ENCODE measurements at regions of chr2 and their contacts with region 1.

Region 1: DNA sequence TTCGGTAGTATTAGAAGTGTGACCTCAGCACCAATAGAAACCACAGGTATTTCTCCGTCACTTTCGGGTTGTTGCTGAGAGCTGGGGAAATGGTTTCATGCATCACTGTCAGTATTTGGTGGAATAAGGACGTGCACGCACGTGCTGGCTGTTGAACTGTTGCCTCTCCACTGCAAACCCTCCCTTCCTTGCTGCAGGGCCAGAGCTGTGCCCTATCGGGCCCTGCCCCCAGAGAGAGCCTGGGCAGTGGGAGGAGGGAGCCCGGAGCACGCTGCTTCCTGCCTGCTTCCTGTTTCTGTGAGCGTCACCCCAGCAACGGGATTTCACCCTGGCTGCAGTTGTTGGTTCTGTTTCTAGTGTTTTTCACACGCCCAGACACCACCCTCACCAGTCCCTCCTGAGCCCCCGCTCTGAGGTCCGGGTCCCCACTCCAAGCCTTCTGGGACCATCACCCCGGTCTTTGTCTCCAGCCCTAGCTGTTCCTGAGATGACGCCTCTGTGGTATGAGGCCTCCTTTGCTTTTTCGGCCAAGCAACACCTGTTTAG is 47.4 kb downstream of the LRRFIP1 start:
- DNase-seq: peak; percentile 95 to 98 (median 97)
- H3K4me3 ChIP-seq: peak overlapping the region in 6 of 7 experiments; percentile 29 to 77 (median 56)
- H3K27ac ChIP-seq: peak overlapping the region; percentile 97 to 98
- H3K4me1 ChIP-seq: peaks cover 40 to 74% (median 68%) of the 10 kb centered on the region in 4 experiments
- H3K27me3 ChIP-seq: no peaks in the 10 kb centered on the region

Region 2: GRCh38 chr2:237378650-237379049 is 296.2 kb before region 1 on chr2:
- CTCF ChIA-PET with region 1: no interaction called
- POLR2A ChIA-PET with region 1: no interaction called
- DNase-seq: no peak
- H3K4me3 ChIP-seq: no peak overlapping the region
- H3K27ac ChIP-seq: no peak overlapping the region
- H3K4me1 ChIP-seq: no peaks in the 10 kb centered on the region
- H3K27me3 ChIP-seq: peaks cover 0 to 8% (median 0%) of the 10 kb centered on the region in 5 experiments

Region 3: DNA sequence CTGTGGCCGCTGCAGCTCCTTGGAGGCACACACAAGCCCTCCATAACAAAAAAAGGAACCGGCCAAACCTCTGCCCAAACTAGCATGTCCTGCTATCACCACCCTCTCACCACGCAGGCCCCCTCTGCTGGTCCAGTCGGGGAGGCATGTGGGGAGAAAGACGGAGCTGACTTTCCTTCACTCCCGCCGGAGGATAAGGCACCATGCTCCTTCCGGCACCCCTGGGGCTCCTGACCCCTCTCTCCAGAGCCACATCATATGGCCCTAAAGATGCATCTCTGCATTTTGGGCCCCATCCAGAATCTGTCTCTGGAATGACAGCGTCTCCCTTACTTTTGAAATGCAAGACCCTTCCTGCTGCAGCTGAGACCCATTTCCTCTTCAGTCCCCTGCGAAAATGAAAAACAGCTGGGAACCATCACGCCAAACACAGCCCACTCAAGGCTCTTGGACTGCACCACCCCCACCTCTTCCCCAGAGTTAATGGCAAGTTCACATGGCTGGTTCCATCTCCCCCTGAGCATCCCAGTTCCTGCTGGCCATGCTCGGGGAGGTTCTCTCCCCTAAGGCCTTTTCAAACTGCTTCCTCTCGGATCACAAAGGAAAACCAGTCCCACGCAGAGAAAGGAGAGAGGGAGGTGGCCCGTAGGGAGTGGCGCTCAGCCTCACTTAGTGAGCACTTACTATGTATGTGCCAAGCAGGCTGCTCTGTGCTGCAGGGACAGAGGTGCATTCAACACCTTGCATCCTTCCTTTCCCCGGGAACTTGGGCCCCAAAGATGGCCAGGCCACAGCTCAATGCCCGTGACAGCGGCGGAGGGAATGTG is 222.9 kb before region 1 on chr2:
- CTCF ChIA-PET with region 1: no interaction called
- POLR2A ChIA-PET with region 1: no interaction called
- DNase-seq: no peak
- H3K4me3 ChIP-seq: no peak overlapping the region
- H3K27ac ChIP-seq: no peak overlapping the region
- H3K4me1 ChIP-seq: peaks cover 0 to 61% (median 37%) of the 10 kb centered on the region in 4 experiments
- H3K27me3 ChIP-seq: no peaks in the 10 kb centered on the region

Region 4: DNA sequence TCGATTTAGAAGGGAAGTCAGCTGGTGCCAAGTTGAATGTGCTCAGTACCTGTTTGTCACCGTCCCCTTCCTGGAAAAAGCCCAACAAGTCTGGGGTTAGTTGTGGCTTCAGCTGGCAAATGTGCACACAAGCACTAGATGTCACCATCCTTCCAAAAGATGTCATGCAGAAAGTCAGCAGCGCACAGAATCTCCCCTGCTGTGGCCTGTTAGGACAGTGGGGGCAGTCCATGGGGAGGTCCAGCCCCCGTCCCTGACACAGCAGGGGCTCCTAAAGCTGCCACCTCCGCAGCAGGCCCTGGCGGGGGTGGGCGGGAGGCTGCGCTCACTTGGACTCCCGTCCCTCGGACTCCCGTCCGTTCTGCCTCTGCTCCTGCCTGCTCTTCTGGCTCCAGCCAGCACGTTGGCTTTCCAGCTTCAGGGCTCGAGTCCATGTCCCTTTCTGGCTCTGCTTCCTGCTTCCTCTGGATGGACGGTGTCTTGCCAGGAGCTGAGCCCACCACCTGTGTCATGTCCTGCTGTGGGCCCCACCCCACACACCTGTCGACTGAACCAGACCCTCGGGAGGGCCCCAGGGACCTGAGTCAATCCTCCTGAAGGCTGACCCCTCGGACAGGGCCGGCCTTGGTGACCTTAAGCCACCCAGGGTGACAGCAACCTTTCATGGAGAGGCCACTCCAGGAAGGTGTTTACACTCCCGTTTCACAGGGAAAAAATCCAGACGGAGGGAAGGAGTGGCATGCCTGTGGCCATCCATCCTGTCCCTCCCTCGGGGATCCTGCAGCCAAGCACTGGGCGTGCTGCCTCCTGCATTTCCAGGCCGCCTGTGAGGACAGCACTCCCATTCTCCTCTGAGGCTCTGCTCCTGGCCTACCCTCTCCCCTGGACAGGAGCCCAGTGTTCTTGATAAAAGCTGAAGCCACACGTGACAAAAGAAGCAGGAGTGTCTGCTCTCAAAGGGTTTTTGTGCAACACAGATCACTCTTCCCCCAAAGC is 92.8 kb before region 1 on chr2:
- CTCF ChIA-PET with region 1: interaction called, 18 read pairs
- POLR2A ChIA-PET with region 1: no interaction called
- DNase-seq: peak; percentile 85 to 92 (median 92)
- H3K4me3 ChIP-seq: peak overlapping the region in 1 of 7 experiments; percentile 46
- H3K27ac ChIP-seq: no peak overlapping the region
- H3K4me1 ChIP-seq: peaks cover 0 to 12% (median 8%) of the 10 kb centered on the region in 4 experiments
- H3K27me3 ChIP-seq: no peaks in the 10 kb centered on the region

Region 5: DNA sequence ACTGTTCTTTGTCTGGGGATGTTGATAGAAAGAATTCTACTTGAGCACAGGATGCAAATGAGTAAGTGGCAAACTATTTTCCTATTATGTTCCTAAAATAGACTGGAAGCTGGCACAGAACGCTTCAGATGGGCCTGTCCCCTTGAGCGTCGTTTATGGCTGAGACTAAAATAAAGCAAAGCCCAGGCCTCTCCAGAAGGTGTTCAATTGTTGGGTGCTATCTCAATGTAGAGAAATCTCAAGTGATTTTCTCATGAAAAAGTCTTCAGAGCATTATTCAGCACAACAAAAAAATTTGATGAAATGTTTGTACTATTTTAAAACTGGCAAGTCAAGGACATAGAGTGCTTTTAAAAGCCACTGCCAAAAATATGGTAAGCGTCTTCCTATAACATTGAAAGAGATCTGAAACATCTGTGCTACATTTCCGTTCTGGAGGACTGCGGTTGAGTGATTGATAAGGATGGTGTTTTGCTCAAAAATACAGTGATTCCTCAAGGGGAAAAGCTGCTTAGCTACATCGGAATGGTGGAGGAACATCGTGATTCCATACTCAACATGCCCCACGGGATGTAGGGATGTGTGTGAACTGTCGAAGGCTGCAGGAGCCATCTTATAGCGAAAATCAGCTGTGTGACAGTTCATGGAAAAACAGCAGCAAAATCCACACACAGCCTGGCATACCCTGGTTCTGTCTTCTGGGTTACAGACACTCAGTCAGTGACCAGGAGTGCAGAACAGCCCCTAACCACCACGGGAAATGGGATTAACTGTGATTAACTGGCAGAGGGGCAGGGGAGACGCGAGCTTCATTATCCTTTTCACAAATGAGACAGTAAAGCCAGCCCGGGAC is 57.8 kb before region 1 on chr2:
- CTCF ChIA-PET with region 1: interaction called, 26 read pairs
- POLR2A ChIA-PET with region 1: no interaction called
- DNase-seq: peak; percentile 88 to 97 (median 94)
- H3K4me3 ChIP-seq: peak overlapping the region in 3 of 7 experiments; percentile 21 to 62 (median 29)
- H3K27ac ChIP-seq: no peak overlapping the region
- H3K4me1 ChIP-seq: peaks cover 31 to 58% (median 52%) of the 10 kb centered on the region in 4 experiments
- H3K27me3 ChIP-seq: no peaks in the 10 kb centered on the region

Region 6: GRCh38 chr2:237662671-237663093 is 12.1 kb before region 1 on chr2:
- CTCF ChIA-PET with region 1: interaction called, 10 read pairs
- POLR2A ChIA-PET with region 1: interaction called, 6 read pairs
- DNase-seq: peak; percentile 89 to 97 (median 97)
- H3K4me3 ChIP-seq: peak overlapping the region in 3 of 7 experiments; percentile 39 to 66 (median 40)
- H3K27ac ChIP-seq: no peak overlapping the region
- H3K4me1 ChIP-seq: peaks cover 0 to 24% (median 14%) of the 10 kb centered on the region in 4 experiments
- H3K27me3 ChIP-seq: peaks cover 0 to 2% (median 0%) of the 10 kb centered on the region in 5 experiments

Region 7: GRCh38 chr2:237691908-237692600 is 17.2 kb after region 1 on chr2:
- CTCF ChIA-PET with region 1: interaction called, 404 read pairs
- POLR2A ChIA-PET with region 1: interaction called, 78 read pairs
- DNase-seq: peak; percentile 83 to 90 (median 90)
- H3K4me3 ChIP-seq: peak overlapping the region; percentile 78 to 99 (median 95)
- H3K27ac ChIP-seq: peak overlapping the region; percentile 90 to 93
- H3K4me1 ChIP-seq: peaks cover 49 to 90% (median 78%) of the 10 kb centered on the region in 4 experiments
- H3K27me3 ChIP-seq: no peaks in the 10 kb centered on the region

Region 8: GRCh38 chr2:237731663-237732062 is 56.9 kb after region 1 on chr2:
- CTCF ChIA-PET with region 1: interaction called, 65 read pairs
- POLR2A ChIA-PET with region 1: interaction called, 9 read pairs
- DNase-seq: peak in 2 of 3 donors; percentile 59 to 62
- H3K4me3 ChIP-seq: no peak overlapping the region
- H3K27ac ChIP-seq: no peak overlapping the region
- H3K4me1 ChIP-seq: peaks cover 0 to 32% (median 24%) of the 10 kb centered on the region in 4 experiments
- H3K27me3 ChIP-seq: no peaks in the 10 kb centered on the region

Region 9: DNA sequence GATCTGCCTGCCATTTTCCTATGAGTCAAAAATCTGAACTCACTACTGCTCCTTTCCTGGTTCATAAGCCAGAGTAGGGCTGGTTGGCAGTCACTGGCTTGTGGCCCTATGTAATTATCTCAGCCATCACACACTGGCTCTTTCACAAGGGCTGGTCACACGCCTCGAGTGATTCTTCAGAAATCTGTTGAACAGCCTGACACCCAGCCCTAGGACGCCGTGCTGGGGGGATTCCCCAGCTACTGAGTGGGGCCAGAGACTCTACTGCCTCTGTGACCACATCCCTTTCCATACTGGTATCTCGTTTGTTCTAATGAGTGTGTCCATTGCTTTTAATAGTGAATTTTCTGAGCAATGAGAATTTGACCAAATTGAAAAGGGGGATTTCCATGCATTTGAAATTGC is 78.0 kb after region 1 on chr2:
- CTCF ChIA-PET with region 1: interaction called, 160 read pairs
- POLR2A ChIA-PET with region 1: no interaction called
- DNase-seq: peak in 2 of 3 donors; percentile 69
- H3K4me3 ChIP-seq: no peak overlapping the region
- H3K27ac ChIP-seq: no peak overlapping the region
- H3K4me1 ChIP-seq: peaks cover 0 to 2% (median 0%) of the 10 kb centered on the region in 4 experiments
- H3K27me3 ChIP-seq: no peaks in the 10 kb centered on the region

Region 10: DNA sequence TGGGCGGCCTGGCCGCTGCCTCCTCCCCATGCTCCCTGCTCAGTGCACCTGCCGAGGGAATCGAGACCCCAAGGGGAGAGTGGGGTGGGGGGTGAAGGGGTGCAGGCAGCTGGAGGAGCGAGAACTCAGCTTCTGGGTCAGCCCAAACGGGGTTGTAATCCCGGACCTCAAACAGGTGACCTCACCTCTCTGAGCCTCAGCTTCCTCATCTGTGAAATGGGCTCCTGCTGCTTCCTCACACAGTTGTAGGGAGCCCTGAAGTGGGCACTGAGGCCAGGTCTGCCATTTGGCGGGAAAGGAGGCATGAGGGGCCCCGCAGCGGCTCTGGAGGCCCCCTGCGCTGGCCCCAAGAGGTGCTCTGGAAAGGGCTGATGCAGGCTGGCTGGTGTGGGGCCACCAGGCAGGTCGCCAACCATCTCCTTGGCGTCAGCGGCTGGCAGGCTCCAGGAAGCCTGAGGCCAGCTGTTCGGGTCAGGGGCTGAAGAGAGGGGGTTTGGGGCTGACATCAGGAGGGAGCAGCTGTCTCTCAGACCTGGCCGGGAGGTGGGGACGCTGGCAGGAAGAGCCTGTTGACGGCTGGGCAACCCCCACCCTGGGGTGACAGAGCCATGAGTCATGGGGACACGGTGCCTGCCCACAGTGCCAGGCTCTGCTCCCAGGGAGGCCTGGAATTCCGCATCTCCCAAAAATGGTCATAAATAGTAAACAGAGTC is 468.6 kb after region 1 on chr2:
- CTCF ChIA-PET with region 1: no interaction called
- POLR2A ChIA-PET with region 1: no interaction called
- DNase-seq: peak in 2 of 3 donors; percentile 79 to 84
- H3K4me3 ChIP-seq: no peak overlapping the region
- H3K27ac ChIP-seq: no peak overlapping the region
- H3K4me1 ChIP-seq: peaks cover 0 to 25% (median 17%) of the 10 kb centered on the region in 4 experiments
- H3K27me3 ChIP-seq: no peaks in the 10 kb centered on the region

Measured in common myeloid progenitor, CD34-positive (primary cell).